ENCODE measurements at regions of chr5 and their contacts with region 1.

Region 1: DNA sequence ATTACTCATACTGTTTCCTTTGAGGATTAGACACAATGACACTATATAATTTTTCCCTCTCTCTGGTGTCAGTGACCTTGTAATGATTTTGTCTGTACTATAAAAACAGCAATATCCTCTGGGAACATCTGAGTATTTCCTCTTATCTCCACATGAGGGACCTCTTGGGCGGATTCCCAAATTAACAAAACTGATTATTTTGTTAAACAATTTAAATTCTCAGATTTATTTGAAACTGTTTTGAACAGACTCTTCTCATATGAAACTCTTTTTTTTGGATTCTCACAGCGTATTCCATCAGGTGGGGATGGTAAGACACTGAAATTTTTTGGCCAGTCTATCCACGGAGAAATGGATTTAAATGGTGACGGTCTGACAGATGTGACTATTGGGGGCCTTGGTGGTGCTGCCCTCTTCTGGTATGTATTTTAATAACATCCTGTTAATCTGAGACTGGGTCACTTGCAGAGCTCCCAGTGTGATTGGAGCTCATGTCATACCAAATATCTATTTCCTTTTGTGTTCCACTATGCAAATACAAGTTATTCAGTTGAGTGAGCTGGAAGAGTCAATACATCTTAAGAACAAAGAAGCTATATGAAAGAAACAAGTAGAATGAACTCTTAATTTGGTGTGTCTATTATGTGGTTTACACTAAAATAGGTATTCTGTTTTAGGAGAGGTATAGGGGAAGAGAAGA is 73.8 kb upstream of the ITGA2 start:
- DNase-seq: peak; percentile 68
- H3K4me3 Mint-ChIP-seq: peak overlapping the region; percentile 56
- H3K27ac Mint-ChIP-seq: peak overlapping the region; percentile 57
- H3K4me1 Mint-ChIP-seq: peaks cover 13% of the 10 kb centered on the region
- H3K27me3 Mint-ChIP-seq: no peaks in the 10 kb centered on the region
- CTCF ChIP-seq: peak; percentile 53

Region 2: DNA sequence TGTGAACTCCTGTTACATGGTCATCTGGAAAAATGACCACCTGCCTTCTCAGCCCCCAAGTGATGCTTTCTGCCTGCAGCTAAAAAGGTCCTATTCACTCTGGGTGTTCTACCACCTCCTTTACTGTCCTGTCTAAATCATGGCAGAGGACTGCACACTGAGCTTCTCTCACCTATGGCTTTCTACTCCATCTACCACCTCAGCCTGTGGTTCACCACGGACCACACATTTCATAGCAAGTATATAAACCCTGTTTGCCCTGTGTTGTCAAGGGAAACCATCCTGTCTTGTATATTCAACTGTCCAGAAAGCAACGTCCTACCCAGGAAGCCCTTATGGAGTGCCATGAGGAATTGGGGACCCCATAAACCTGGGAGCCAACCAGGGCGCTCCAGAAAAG is 295.0 kb before region 1 on chr5:
- CTCF ChIA-PET with region 1: no interaction called
- intact Hi-C with region 1: no loop called
- DNase-seq: no peak
- H3K4me3 Mint-ChIP-seq: no peak overlapping the region
- H3K27ac Mint-ChIP-seq: no peak overlapping the region
- H3K4me1 Mint-ChIP-seq: no peaks in the 10 kb centered on the region
- H3K27me3 Mint-ChIP-seq: no peaks in the 10 kb centered on the region
- CTCF ChIP-seq: no peak

Region 3: GRCh38 chr5:52655163-52655562 is 260.2 kb before region 1 on chr5:
- CTCF ChIA-PET with region 1: no interaction called
- intact Hi-C with region 1: no loop called
- DNase-seq: no peak
- H3K4me3 Mint-ChIP-seq: no peak overlapping the region
- H3K27ac Mint-ChIP-seq: no peak overlapping the region
- H3K4me1 Mint-ChIP-seq: no peaks in the 10 kb centered on the region
- H3K27me3 Mint-ChIP-seq: no peaks in the 10 kb centered on the region
- CTCF ChIP-seq: no peak

Region 4: DNA sequence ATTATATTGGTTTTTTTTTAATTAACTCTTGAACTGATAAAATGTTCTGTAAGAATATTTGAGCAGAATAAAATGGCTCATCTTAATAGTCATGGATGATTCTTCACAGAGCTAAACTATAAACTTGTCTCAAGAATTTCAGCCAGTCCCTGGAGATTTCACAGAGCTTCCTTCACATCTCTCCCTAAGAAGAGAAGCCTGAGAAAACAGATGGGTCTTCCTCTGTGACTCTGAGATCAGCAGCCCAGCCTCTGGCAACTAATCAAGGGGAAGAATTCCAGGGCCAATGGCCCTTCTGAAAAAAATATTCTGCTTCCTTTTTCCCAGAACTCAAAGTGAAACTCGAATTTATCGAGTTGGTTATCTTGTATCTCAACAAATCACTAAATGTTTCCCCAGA is 249.8 kb before region 1 on chr5:
- CTCF ChIA-PET with region 1: interaction called, 9 read pairs
- intact Hi-C with region 1: loop called (anchors 1 kb)
- DNase-seq: no peak
- H3K4me3 Mint-ChIP-seq: no peak overlapping the region
- H3K27ac Mint-ChIP-seq: no peak overlapping the region
- H3K4me1 Mint-ChIP-seq: peaks cover 19% of the 10 kb centered on the region
- H3K27me3 Mint-ChIP-seq: no peaks in the 10 kb centered on the region
- CTCF ChIP-seq: no peak

Region 5: GRCh38 chr5:52693280-52693679 is 222.0 kb before region 1 on chr5:
- CTCF ChIA-PET with region 1: interaction called, 7 read pairs
- intact Hi-C with region 1: loop called (anchors 1 kb)
- DNase-seq: peak; percentile 53
- H3K4me3 Mint-ChIP-seq: no peak overlapping the region
- H3K27ac Mint-ChIP-seq: no peak overlapping the region
- H3K4me1 Mint-ChIP-seq: peaks cover 30% of the 10 kb centered on the region
- H3K27me3 Mint-ChIP-seq: peaks cover 8% of the 10 kb centered on the region
- CTCF ChIP-seq: peak; percentile 37

Region 6: DNA sequence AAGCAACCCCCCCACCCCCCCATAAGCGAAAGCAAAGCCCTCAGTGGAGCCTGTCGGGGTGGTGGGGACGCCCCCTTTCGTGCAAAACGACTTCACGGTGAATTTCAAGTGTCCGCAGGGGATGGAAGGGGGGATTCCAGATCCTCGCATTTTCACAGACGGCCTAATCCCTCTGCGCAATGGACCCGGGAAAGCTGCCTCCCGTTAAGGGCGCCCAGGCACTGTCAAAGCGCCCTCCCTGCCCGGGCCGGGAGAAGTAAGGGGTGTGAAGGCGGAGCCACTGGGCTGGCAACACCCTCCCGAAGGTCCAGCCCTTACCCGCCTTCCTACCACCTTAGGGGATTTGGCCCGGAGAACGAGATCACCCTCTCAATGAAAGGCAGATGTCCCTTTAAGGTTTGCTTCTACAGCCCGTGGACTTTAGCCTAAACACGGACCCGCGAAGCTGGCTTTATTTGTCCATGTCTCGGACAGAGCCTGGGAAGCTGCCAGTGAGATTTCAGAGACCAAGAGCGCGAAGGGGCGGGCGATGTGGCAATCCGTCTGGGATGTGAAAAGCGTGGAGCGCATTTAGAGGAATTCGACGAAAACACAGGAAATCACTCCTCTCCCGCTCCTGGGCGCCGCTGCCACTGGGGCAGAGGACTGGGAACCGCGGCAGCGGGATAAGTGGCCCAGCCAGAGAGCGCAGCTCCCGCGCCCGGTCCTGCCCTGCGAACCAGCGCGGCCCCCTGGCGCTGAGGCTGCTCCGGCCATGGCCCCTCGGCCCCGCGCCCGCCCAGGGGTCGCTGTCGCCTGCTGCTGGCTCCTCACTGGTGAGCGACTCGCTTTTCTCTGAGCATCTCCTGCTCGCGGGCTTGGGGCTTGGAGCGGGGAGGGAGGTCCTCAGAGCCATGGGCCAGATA is 127.5 kb before region 1 on chr5 and contains the starts of genes ITGA1 and PELO:
- CTCF ChIA-PET with region 1: interaction called, 13 read pairs
- intact Hi-C with region 1: loop called (anchors 1 kb)
- DNase-seq: peak; percentile 77
- H3K4me3 Mint-ChIP-seq: peak within 1 kb of the TSS; percentile 90
- H3K27ac Mint-ChIP-seq: peak within 1 kb of the TSS; percentile 73
- H3K4me1 Mint-ChIP-seq: peaks cover 47% of the 10 kb centered on the region
- H3K27me3 Mint-ChIP-seq: no peaks in the 10 kb centered on the region
- CTCF ChIP-seq: no peak
- total RNA-seq, gene ITGA1: 18.9 and 20.2 TPM in 2 replicates
- total RNA-seq, gene PELO: 24.6 and 26.4 TPM in 2 replicates

Region 7: DNA sequence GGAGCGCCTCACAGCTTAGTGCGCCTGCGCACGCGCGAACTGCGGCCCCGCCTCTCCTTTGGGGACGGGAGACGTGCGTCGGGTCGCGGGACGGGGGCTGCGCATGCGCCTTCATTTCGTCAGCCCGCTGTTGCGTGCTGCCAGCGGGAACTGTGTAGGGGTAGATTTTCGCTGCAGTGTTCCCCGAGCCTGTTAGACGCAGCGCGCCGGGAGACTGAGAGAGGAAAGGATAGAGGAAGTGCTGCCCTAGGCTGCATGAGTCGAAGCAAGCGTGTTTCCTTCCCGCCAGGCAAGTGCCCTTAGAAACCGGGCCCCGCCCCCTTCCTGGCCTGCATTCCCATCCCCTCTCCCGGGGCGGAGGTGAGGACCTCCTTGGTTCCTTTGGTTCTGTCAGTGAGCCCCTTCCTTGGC is 115.3 kb before region 1 on chr5:
- CTCF ChIA-PET with region 1: interaction called, 4 read pairs
- intact Hi-C with region 1: loop called (anchors 2 kb)
- DNase-seq: peak; percentile 95
- H3K4me3 Mint-ChIP-seq: peak overlapping the region; percentile 77
- H3K27ac Mint-ChIP-seq: peak overlapping the region; percentile 71
- H3K4me1 Mint-ChIP-seq: peaks cover 34% of the 10 kb centered on the region
- H3K27me3 Mint-ChIP-seq: no peaks in the 10 kb centered on the region
- CTCF ChIP-seq: no peak

Measured in Calu3 (cell line).